ENCODE measurements at regions of chr19 and their contacts with region 1.

Region 1: GRCh38 chr19:51166846-51167490 is 24.9 kb downstream of the SIGLEC7 start:
- DNase-seq: peak; percentile 58 to 70 (median 64)
- H3K4me3 ChIP-seq: peak overlapping the region in 1 of 3 experiments; percentile 36
- H3K4me3 Mint-ChIP-seq: peak overlapping the region; percentile 39 to 59
- H3K27ac ChIP-seq: peak overlapping the region in 1 of 2 donors; percentile 2
- H3K27ac Mint-ChIP-seq: peak overlapping the region in 6 of 7 donors; percentile 5 to 68 (median 44)
- H3K4me1 ChIP-seq: peaks cover 18 to 19% of the 10 kb centered on the region in 2 donors
- H3K4me1 Mint-ChIP-seq: peaks cover 23% of the 10 kb centered on the region
- H3K27me3 ChIP-seq: no peaks in the 10 kb centered on the region
- H3K27me3 Mint-ChIP-seq: peaks cover 0 to 8% (median 3%) of the 10 kb centered on the region in 3 donors
- CTCF ChIP-seq: no peak

Region 2: GRCh38 chr19:50922317-50922853 is 244.6 kb before region 1 on chr19:
- intact Hi-C with region 1: loop called in 1 of 2 experiments (anchors 10 kb)
- DNase-seq: peak; percentile 47 to 70 (median 54)
- H3K4me3 ChIP-seq: no peak overlapping the region
- H3K4me3 Mint-ChIP-seq: no peak overlapping the region
- H3K27ac ChIP-seq: no peak overlapping the region
- H3K27ac Mint-ChIP-seq: no peak overlapping the region
- H3K4me1 ChIP-seq: no peaks in the 10 kb centered on the region
- H3K4me1 Mint-ChIP-seq: peaks cover 9% of the 10 kb centered on the region
- H3K27me3 ChIP-seq: peaks cover 0 to 3% of the 10 kb centered on the region in 2 donors
- H3K27me3 Mint-ChIP-seq: peaks cover 5 to 24% (median 19%) of the 10 kb centered on the region in 3 donors
- CTCF ChIP-seq: peak; percentile 97

Region 3: GRCh38 chr19:51138549-51138979 is 28.4 kb before region 1 on chr19:
- intact Hi-C with region 1: no loop called
- DNase-seq: peak; percentile 85 to 95 (median 92)
- H3K4me3 ChIP-seq: peak overlapping the region in 2 of 3 experiments; percentile 7 to 72
- H3K4me3 Mint-ChIP-seq: peak overlapping the region; percentile 65 to 80
- H3K27ac ChIP-seq: peak overlapping the region; percentile 98 to 99
- H3K27ac Mint-ChIP-seq: peak overlapping the region; percentile 98 to 100 (median 100)
- H3K4me1 ChIP-seq: peaks cover 99% of the 10 kb centered on the region in 2 donors
- H3K4me1 Mint-ChIP-seq: peaks cover 95% of the 10 kb centered on the region
- H3K27me3 ChIP-seq: no peaks in the 10 kb centered on the region
- H3K27me3 Mint-ChIP-seq: no peaks in the 10 kb centered on the region
- CTCF ChIP-seq: no peak

Region 4: DNA sequence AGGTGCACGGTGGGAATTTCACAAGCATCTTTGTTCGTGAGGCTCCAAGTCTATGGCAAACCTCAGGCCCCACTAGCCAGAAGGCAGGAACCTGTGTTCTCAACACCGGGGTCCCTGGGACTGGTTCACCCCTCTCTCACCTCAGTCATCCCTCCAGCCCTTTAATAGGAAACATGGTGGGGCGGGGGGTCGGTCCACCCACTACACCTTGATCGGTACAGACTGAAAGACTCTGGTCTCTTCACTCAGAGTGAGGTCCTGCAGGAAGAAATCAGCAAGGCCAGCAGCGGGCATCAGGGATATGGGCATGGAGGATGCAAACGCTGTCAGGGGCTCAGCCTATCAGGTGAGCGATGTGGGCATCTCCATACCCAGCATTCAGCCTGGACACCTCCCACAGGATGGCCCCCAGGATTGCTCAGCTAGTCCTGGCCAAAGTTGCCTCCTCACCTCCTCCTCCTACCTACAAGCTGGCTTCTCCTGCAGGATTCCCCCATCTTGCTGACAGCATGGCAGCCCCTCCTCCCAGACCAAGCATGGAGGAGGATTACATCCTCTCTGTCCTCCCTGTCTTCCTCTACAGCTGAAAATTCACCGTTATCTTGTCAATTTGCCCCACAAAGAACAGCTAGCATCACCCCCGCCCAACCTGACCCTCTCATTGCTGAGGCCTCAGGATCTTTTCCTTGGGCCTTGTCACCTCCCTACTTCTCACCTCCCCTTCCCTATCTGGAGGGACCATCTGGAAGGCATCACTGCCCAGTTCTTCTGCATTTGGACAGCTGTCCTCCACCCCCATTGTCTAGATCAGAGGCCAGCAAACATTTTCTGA is 20.6 kb after region 1 on chr19:
- intact Hi-C with region 1: no loop called
- DNase-seq: no peak
- H3K4me3 ChIP-seq: no peak overlapping the region
- H3K4me3 Mint-ChIP-seq: no peak overlapping the region
- H3K27ac ChIP-seq: no peak overlapping the region
- H3K27ac Mint-ChIP-seq: no peak overlapping the region
- H3K4me1 ChIP-seq: peaks cover 30 to 34% of the 10 kb centered on the region in 2 donors
- H3K4me1 Mint-ChIP-seq: peaks cover 33% of the 10 kb centered on the region
- H3K27me3 ChIP-seq: peaks cover 0 to 5% of the 10 kb centered on the region in 2 donors
- H3K27me3 Mint-ChIP-seq: peaks cover 7 to 11% (median 10%) of the 10 kb centered on the region in 3 donors
- CTCF ChIP-seq: no peak